GM12878 (cell line): ENCODE measurements at regions of chr15 and their contacts with region 1.

Region 1: DNA sequence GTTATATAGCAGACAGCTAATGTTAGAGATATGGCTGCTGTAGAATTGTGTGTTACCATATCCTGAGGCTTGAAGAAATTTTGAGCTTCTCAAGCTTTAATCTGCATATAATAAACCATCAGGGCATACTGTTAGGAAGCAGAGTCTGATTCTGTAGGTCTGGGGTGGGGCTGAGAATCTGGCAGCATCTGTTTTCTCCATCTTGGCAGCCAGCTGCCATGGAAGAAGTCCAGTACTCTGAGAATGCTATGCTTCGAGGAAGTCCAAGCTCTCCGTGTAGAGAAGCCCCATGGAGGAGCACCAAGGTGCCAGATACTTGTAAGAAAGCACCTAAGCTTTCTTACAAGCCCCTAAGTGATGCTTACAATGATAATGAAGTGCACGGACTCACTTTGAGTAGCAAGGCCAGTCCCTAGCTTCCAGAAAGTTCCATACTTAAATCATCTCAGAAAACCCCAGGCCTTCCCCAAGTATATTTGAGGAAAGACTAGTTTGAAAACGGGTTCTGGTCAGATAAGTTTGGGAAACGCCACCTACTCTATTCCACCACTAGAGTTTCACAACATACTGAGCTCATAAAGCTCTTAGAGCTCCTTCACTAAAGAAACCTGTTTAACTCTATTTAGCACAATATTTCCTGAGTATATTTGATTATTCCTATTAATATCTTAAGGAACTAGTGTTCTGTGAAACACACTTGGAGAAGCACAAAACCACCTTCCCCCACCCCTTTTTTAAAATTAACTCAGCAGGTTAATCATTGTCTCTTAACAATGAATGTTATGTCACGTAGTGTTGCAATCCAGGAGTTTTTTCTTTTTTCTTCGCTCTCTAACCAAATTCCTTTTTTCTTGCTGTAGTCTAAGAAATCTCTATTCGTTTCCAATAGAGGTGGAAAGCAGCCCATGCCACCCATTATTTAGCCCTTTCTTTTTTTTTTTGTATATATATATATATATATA is 59.9 kb upstream of the RASGRP1 start:
- DNase-seq: no peak
- ATAC-seq: peak; percentile 33
- H3K4me3 ChIP-seq: no peak overlapping the region
- H3K27ac ChIP-seq: no peak overlapping the region
- H3K4me1 ChIP-seq: no peaks in the 10 kb centered on the region
- H3K27me3 ChIP-seq: no peaks in the 10 kb centered on the region
- CTCF ChIP-seq: 0 out of 6 replicates have a peak, but pooled peaks of 1 of the 3 experiments have one; percentile 3
- EP300 ChIP-seq: no peak
- POLR2A ChIP-seq: no peak
- RAD21 ChIP-seq: no peak

Region 2: DNA sequence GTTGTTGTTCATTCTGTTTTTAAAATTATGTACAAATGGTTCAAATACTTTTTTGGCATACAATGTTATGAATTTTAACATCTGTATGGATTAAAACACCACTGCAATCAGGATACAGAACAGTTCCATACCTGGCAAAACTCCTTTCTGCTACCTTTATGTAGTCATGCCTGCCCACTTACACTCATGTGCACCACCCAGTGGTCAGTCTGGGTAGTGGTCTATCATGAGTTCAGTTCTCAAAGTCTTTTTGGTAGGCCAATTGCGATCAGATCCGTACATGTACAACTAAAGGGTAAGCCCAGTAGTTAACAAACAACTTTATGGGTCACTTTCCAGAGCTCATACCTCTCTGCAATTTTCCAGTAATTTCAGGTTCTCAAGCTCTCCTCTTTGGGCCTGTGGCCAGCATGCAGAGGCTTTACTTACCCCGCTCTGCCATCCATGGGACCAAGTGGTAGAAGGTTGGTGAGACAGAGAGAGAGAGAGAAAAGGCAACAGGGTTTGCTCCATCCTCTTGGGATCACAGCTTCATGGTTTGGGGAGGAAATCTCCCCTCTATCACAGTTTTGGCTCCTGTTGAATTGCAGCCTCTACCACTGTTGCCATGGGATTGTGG is 234.5 kb before region 1 on chr15:
- CTCF ChIA-PET with region 1: no interaction called
- POLR2A ChIA-PET with region 1: no interaction called
- RAD21 ChIA-PET with region 1: no interaction called
- SMC1A ChIA-PET with region 1: no interaction called
- in situ Hi-C with region 1: no loop called
- intact Hi-C with region 1: no loop called
- DNase-seq: peak; percentile 15
- ATAC-seq: peak; percentile 91
- H3K4me3 ChIP-seq: no peak overlapping the region
- H3K27ac ChIP-seq: no peak overlapping the region
- H3K4me1 ChIP-seq: no peaks in the 10 kb centered on the region
- H3K27me3 ChIP-seq: no peaks in the 10 kb centered on the region
- CTCF ChIP-seq: peak; percentile 80 to 88 (median 83)
- EP300 ChIP-seq: no peak
- POLR2A ChIP-seq: no peak
- RAD21 ChIP-seq: peak; percentile 79

Region 3: DNA sequence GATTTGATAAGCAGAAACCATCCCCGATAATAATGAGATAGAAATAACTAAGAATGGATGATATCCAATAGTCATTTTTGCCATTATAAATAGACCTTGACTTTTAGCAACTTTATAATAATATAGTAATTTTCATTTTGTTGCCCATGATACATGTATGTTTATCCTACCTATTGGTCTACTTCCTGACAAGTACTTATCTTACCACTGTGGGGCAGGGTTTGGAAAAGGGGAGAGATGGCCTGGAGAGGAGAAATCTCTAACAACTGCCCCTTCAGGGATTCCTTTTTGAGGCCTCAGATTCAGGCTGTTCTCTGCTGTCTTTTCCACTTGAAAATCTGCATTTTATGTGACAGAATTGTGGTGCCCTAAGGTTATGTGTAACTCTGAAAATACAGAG is 128.4 kb before region 1 on chr15:
- CTCF ChIA-PET with region 1: no interaction called
- POLR2A ChIA-PET with region 1: no interaction called
- RAD21 ChIA-PET with region 1: no interaction called
- SMC1A ChIA-PET with region 1: no interaction called
- in situ Hi-C with region 1: no loop called
- intact Hi-C with region 1: no loop called
- DNase-seq: no peak
- ATAC-seq: no peak
- H3K4me3 ChIP-seq: no peak overlapping the region
- H3K27ac ChIP-seq: no peak overlapping the region
- H3K4me1 ChIP-seq: no peaks in the 10 kb centered on the region
- H3K27me3 ChIP-seq: no peaks in the 10 kb centered on the region
- CTCF ChIP-seq: no peak
- EP300 ChIP-seq: no peak
- POLR2A ChIP-seq: no peak
- RAD21 ChIP-seq: no peak

Region 4: GRCh38 chr15:38602901-38603670 is 21.4 kb before region 1 on chr15:
- CTCF ChIA-PET with region 1: interaction called, 10 read pairs
- POLR2A ChIA-PET with region 1: interaction called, 7 read pairs
- RAD21 ChIA-PET with region 1: interaction called, 17 read pairs
- SMC1A ChIA-PET with region 1: interaction called, 238 read pairs
- in situ Hi-C with region 1: no loop called
- intact Hi-C with region 1: no loop called
- DNase-seq: no peak
- ATAC-seq: peak; percentile 22; the same call in 2 of the 3 replicates
- H3K4me3 ChIP-seq: no peak overlapping the region
- H3K27ac ChIP-seq: no peak overlapping the region
- H3K4me1 ChIP-seq: no peaks in the 10 kb centered on the region; the same call in 1 of the 2 replicates
- H3K27me3 ChIP-seq: peaks cover 0 to 3% of the 10 kb centered on the region in 2 experiments; a peak in 1 of 4 replicates
- CTCF ChIP-seq: no peak
- EP300 ChIP-seq: no peak
- POLR2A ChIP-seq: no peak
- RAD21 ChIP-seq: no peak

Region 5: DNA sequence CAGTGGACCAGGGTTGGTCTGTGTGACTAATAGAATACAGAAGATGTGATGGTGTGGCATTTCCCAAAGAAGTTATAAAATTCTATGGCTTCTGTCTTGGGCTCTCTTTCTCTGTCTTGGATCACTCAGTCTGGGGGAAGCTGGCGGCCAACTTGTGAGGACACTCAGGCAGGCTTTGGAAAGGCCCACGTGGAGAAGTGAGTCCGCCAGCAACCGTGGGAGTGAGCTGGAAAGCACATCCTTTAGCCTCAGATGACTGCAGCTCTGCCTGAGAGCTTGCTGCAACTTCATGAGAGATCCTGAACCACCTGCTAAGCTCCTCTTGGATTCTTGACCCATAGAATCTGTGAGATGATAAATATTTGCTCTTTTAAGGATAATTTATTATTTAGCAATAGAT is 12.1 kb after region 1 on chr15:
- CTCF ChIA-PET with region 1: interaction called, 24 read pairs
- POLR2A ChIA-PET with region 1: interaction called, 30 read pairs
- RAD21 ChIA-PET with region 1: interaction called, 55 read pairs
- SMC1A ChIA-PET with region 1: interaction called, 1,803 read pairs
- in situ Hi-C with region 1: no loop called
- intact Hi-C with region 1: no loop called
- DNase-seq: no peak
- ATAC-seq: no peak
- H3K4me3 ChIP-seq: no peak overlapping the region
- H3K27ac ChIP-seq: no peak overlapping the region
- H3K4me1 ChIP-seq: no peaks in the 10 kb centered on the region
- H3K27me3 ChIP-seq: no peaks in the 10 kb centered on the region
- CTCF ChIP-seq: no peak
- EP300 ChIP-seq: no peak
- POLR2A ChIP-seq: no peak
- RAD21 ChIP-seq: no peak

Region 6: DNA sequence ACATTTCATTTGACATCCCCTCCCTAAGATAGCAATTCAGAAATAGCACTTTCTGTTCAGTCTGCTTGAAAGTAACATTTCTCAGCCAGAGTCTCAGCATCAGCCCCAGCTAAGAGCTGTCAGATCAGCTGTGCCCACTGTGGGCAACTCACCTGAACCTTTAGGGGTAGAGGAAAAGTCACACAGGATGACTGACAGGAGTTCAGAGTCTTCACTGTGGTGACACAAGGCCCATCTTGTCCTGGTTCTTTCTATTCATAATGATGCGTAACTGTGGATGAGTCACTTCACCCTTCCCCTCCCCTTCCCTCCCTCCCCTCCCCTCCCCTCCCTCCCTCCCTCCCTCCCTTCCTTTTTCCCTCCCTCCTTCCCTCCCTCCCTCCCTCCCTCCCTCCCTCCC is 36.2 kb after region 1 on chr15:
- CTCF ChIA-PET with region 1: interaction called, 20 read pairs
- POLR2A ChIA-PET with region 1: interaction called, 310 read pairs
- RAD21 ChIA-PET with region 1: interaction called, 737 read pairs
- SMC1A ChIA-PET with region 1: interaction called, 1,803 read pairs
- in situ Hi-C with region 1: no loop called
- intact Hi-C with region 1: no loop called
- DNase-seq: no peak
- ATAC-seq: peak; percentile 67
- H3K4me3 ChIP-seq: no peak overlapping the region
- H3K27ac ChIP-seq: no peak overlapping the region
- H3K4me1 ChIP-seq: no peaks in the 10 kb centered on the region; the same call in 1 of the 2 replicates
- H3K27me3 ChIP-seq: no peaks in the 10 kb centered on the region
- CTCF ChIP-seq: no peak
- EP300 ChIP-seq: no peak
- POLR2A ChIP-seq: no peak
- RAD21 ChIP-seq: no peak

Region 7: DNA sequence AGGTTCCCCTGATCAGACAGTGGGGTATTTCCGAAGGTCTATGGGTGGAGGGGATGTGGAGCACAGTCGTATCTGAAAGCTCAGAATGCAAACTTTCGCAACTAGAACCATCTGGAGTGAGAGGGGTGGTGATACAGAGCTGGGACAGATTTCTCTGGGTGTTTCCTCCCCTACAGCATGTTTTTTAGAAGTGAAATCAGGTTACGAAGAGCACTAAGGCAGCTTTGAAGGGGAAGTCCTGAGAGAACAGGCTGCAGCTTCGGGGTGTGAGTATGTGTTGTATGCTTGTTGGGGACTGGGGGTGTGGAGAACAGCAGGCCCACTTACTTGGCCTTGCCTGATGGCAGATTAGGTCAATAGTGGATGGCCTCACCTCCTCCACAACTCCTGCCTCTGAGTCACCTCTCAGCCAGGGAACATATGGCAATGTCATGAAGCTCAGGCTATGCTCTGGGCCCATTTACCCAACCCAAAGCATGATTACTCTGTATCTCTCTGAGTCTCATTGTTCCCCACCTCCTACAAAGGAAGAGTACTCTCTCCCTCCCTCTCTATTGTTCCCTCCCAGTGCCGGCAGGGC is 47.2 kb after region 1 on chr15:
- CTCF ChIA-PET with region 1: interaction called, 51 read pairs
- POLR2A ChIA-PET with region 1: interaction called, 109 read pairs
- RAD21 ChIA-PET with region 1: interaction called, 416 read pairs
- SMC1A ChIA-PET with region 1: interaction called, 1,803 read pairs
- in situ Hi-C with region 1: no loop called
- intact Hi-C with region 1: no loop called
- DNase-seq: peak; percentile 91
- ATAC-seq: peak; percentile 76
- H3K4me3 ChIP-seq: no peak overlapping the region
- H3K27ac ChIP-seq: peak overlapping the region; percentile 77
- H3K4me1 ChIP-seq: peaks cover 56% of the 10 kb centered on the region
- H3K27me3 ChIP-seq: no peaks in the 10 kb centered on the region
- CTCF ChIP-seq: no peak
- EP300 ChIP-seq: peak in 1 of 2 experiments; percentile 7; a peak in 2 of 4 replicates
- POLR2A ChIP-seq: peak; percentile 61
- RAD21 ChIP-seq: no peak; the same call in 1 of the 2 replicates

Region 8: GRCh38 chr15:38707802-38708671 is 83.5 kb after region 1 on chr15:
- CTCF ChIA-PET with region 1: no interaction called
- POLR2A ChIA-PET with region 1: no interaction called
- RAD21 ChIA-PET with region 1: no interaction called
- SMC1A ChIA-PET with region 1: no interaction called
- in situ Hi-C with region 1: no loop called
- intact Hi-C with region 1: no loop called
- DNase-seq: no peak
- ATAC-seq: peak; percentile 98
- H3K4me3 ChIP-seq: no peak overlapping the region
- H3K27ac ChIP-seq: no peak overlapping the region
- H3K4me1 ChIP-seq: no peaks in the 10 kb centered on the region
- H3K27me3 ChIP-seq: no peaks in the 10 kb centered on the region
- CTCF ChIP-seq: peak; percentile 75 to 82 (median 76)
- EP300 ChIP-seq: no peak
- POLR2A ChIP-seq: no peak
- RAD21 ChIP-seq: peak; percentile 91